ENCODE measurements at regions of chrX and their contacts with region 1.

Region 1: GRCh38 chrX:41441934-41442823 is 5.0 kb upstream of the NYX start:
- DNase-seq: peak; percentile 81 to 90
- ATAC-seq: peak; percentile 92 to 98 (median 94)
- H3K4me3 ChIP-seq: peak overlapping the region; percentile 37
- H3K4me3 Mint-ChIP-seq: peak overlapping the region; percentile 66
- H3K27ac ChIP-seq: peak overlapping the region; percentile 55
- H3K27ac Mint-ChIP-seq: peak overlapping the region; percentile 63 to 88
- H3K4me1 ChIP-seq: peaks cover 16% of the 10 kb centered on the region
- H3K4me1 Mint-ChIP-seq: peaks cover 5% of the 10 kb centered on the region in 2 donors
- H3K27me3 ChIP-seq: no peaks in the 10 kb centered on the region
- H3K27me3 Mint-ChIP-seq: peaks cover 0 to under 1% of the 10 kb centered on the region in 2 donors
- CTCF ChIP-seq: peak; percentile 52

Region 2: GRCh38 chrX:40420899-40421729 is 1021.1 kb before region 1 on chrX:
- intact Hi-C with region 1: no loop called
- DNase-seq: no peak
- ATAC-seq: no peak
- H3K4me3 ChIP-seq: no peak overlapping the region
- H3K4me3 Mint-ChIP-seq: no peak overlapping the region
- H3K27ac ChIP-seq: no peak overlapping the region
- H3K27ac Mint-ChIP-seq: no peak overlapping the region
- H3K4me1 ChIP-seq: peaks cover 12% of the 10 kb centered on the region
- H3K4me1 Mint-ChIP-seq: peaks cover 13 to 24% of the 10 kb centered on the region in 2 donors
- H3K27me3 ChIP-seq: no peaks in the 10 kb centered on the region
- H3K27me3 Mint-ChIP-seq: peaks cover 12 to 63% of the 10 kb centered on the region in 2 donors
- CTCF ChIP-seq: no peak

Region 3: DNA sequence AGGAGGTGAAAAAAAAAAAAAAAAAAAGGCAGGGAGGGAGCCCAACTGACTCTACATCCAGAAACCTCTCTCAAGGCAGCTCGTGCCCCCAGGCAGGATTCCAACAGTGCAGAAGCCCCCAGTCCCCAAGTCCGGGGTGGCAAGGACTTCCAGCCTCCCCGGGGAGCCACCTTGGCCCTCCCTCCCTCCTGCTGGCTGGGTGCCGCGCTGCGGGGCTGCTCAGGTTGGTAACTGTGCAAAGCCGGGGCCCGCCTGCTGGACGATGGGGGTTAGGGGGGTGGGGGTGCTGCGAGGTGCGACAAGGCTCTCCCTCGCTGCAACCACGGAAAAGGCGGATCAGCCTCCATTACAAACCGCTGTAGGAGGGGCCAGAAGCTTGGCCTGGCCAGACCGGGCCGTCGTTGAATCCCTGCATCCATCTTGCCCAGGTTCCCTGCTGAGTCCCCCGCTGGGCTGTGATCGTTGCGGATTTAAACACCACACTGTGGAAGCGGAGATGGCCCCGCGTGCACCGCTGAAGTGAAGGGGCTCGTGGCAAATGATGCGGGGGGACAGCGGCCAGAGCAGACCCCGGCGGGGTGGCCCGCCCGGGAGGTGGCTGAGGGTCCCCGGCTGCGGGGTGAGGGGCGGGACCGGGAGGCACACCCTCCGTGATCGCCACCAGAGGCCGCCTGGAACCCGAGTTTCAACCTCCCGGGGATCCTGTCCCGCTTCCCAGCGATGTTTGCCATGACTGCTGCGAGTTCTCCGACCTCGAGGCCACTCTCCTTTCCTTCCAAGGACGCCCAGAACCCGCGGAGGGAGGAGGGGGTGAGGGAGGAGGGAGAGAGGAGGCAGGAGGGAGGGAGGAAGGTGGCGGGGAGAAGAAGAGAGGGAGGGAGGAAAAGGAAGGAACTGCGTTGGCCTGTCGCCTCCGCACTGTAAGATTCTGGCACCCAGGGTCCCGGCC is 166.2 kb before region 1 on chrX:
- intact Hi-C with region 1: loop called (anchors 10 kb)
- DNase-seq: peak; percentile 16 to 66
- ATAC-seq: peak; percentile 65 to 78 (median 70)
- H3K4me3 ChIP-seq: peak overlapping the region; percentile 52
- H3K4me3 Mint-ChIP-seq: peak overlapping the region; percentile 82
- H3K27ac ChIP-seq: no peak overlapping the region
- H3K27ac Mint-ChIP-seq: peak overlapping the region in 1 of 2 donors; percentile 78
- H3K4me1 ChIP-seq: peaks cover 18% of the 10 kb centered on the region
- H3K4me1 Mint-ChIP-seq: peaks cover 0 to 13% of the 10 kb centered on the region in 2 donors
- H3K27me3 ChIP-seq: no peaks in the 10 kb centered on the region
- H3K27me3 Mint-ChIP-seq: no peaks in the 10 kb centered on the region
- CTCF ChIP-seq: no peak

Region 4: DNA sequence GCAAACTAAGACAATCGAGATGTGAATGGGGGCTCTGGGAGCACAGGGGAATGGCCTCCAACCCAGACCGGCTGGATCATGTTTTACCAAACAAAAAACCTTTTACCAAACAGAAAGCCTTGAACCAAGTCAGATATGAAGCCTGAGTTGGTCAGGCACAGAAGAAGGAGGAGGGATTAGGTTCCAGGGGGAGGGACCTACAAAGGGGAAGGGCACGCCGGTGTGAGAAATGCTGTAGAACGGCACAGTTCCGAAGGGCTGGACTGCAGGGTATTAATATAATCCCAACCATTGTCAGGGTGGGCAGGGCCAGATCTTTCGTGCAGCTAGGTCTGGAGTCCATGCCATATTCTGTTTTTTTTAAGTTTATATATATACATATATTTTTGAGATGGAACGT is 47.9 kb before region 1 on chrX:
- intact Hi-C with region 1: no loop called
- DNase-seq: no peak
- ATAC-seq: no peak
- H3K4me3 ChIP-seq: no peak overlapping the region
- H3K4me3 Mint-ChIP-seq: no peak overlapping the region
- H3K27ac ChIP-seq: no peak overlapping the region
- H3K27ac Mint-ChIP-seq: no peak overlapping the region
- H3K4me1 ChIP-seq: no peaks in the 10 kb centered on the region
- H3K4me1 Mint-ChIP-seq: no peaks in the 10 kb centered on the region
- H3K27me3 ChIP-seq: no peaks in the 10 kb centered on the region
- H3K27me3 Mint-ChIP-seq: peaks cover 0 to 3% of the 10 kb centered on the region in 2 donors
- CTCF ChIP-seq: no peak

Region 5: GRCh38 chrX:41457613-41458192 is 15.5 kb after region 1 on chrX:
- intact Hi-C with region 1: no loop called
- DNase-seq: peak in 1 of 2 donors; percentile 38
- ATAC-seq: peak in 2 of 3 donors; percentile 60 to 75
- H3K4me3 ChIP-seq: no peak overlapping the region
- H3K4me3 Mint-ChIP-seq: no peak overlapping the region
- H3K27ac ChIP-seq: no peak overlapping the region
- H3K27ac Mint-ChIP-seq: no peak overlapping the region
- H3K4me1 ChIP-seq: no peaks in the 10 kb centered on the region
- H3K4me1 Mint-ChIP-seq: peaks cover 5 to 6% of the 10 kb centered on the region in 2 donors
- H3K27me3 ChIP-seq: no peaks in the 10 kb centered on the region
- H3K27me3 Mint-ChIP-seq: peaks cover 0 to 5% of the 10 kb centered on the region in 2 donors
- CTCF ChIP-seq: no peak